A673 (cell line): ENCODE measurements at regions of chr9 and their contacts with region 1.

Region 1: DNA sequence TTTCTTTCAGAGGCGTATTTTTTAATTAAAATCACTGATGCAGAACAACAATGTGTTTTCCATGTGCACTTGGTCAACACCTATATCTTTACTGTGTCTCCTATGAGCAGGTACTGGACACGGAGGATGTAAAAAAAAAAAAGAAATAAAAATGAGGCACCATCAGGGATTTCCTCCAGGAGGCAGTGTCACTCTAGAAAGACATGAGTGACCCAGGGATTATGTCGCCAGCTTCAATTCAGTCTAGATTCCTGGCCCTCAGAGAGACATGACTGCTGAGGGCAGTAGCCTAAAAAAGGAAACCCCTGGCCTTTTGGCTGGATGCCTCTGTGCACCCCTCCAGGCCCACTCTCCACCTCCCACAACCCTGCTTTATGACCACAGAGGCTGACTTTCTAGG is 18.3 kb upstream of the IL33 start:
- DNase-seq: peak; percentile 66
- H3K4me3 ChIP-seq: no peak overlapping the region
- H3K27ac ChIP-seq: no peak overlapping the region
- H3K4me1 ChIP-seq: no peaks in the 10 kb centered on the region
- H3K27me3 ChIP-seq: peaks cover 3% of the 10 kb centered on the region
- CTCF ChIP-seq: peak; percentile 68

Region 2: GRCh38 chr9:6305954-6306563 is 108.7 kb after region 1 on chr9:
- CTCF ChIA-PET with region 1: interaction called, 25 read pairs
- POLR2A ChIA-PET with region 1: no interaction called
- intact Hi-C with region 1: loop called (anchors 1 kb)
- DNase-seq: peak; percentile 65
- H3K4me3 ChIP-seq: no peak overlapping the region
- H3K27ac ChIP-seq: no peak overlapping the region
- H3K4me1 ChIP-seq: no peaks in the 10 kb centered on the region
- H3K27me3 ChIP-seq: peaks cover 10% of the 10 kb centered on the region
- CTCF ChIP-seq: peak; percentile 65

Region 3: GRCh38 chr9:6873857-6874256 is 676.5 kb after region 1 on chr9:
- CTCF ChIA-PET with region 1: no interaction called
- POLR2A ChIA-PET with region 1: no interaction called
- intact Hi-C with region 1: no loop called
- DNase-seq: no peak
- H3K4me3 ChIP-seq: no peak overlapping the region
- H3K27ac ChIP-seq: no peak overlapping the region
- H3K4me1 ChIP-seq: no peaks in the 10 kb centered on the region
- H3K27me3 ChIP-seq: no peaks in the 10 kb centered on the region
- CTCF ChIP-seq: no peak